Endothelial cell of umbilical vein (primary cell): ENCODE measurements at regions of chr16 and their contacts with region 1.

Region 1: DNA sequence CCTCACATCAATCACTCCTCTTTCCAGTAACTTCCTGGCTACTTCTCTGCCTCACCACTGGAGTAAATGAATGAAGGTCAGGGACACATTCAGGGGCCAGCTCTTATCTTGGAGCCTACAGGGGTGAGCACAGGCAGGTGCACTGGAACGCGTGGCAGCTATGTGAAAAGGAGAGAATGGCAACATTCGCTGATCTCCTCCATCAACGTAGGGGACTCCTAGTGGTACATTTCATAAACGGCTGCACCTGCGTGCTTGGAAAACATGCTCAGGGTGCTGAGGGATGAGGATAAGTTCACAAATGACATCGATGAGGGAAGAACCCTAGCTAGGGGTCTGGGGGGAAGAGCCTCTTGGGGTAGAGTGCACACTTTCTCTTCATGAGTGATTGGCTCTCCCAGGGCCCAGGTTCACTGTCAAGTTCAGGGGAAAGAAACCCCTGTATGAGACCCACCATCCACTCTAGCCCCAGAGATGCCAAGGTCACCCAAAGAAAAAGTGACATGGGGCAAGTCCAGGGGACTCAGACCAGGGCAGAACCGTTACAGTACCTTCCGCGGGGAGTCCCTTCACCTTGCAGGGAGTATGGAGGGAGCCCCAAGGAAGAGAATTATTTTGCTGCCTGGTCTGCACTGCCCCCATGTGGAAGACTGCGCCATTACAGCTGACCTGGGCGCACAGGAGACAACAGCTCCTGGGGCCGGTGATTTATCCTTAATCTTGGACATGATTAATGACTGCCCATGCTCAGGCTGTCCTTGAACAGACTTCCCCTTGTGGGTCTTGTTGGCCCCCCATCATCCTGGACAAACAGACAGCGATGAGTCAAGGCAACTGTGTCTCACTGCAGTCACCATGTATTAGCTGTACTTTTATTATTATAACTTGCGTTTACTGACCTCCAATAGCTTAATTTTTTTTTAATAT is 30.1 kb downstream of the VAC14 start:
- DNase-seq: peak; percentile 71
- H3K4me3 ChIP-seq: no peak overlapping the region
- H3K27ac ChIP-seq: no peak overlapping the region
- H3K4me1 ChIP-seq: no peaks in the 10 kb centered on the region
- H3K27me3 ChIP-seq: no peaks in the 10 kb centered on the region
- CTCF ChIP-seq: peak; percentile 88 to 89
- POLR2A ChIP-seq: no peak

Region 2: GRCh38 chr16:70508752-70509151 is 262.1 kb before region 1 on chr16:
- CTCF ChIA-PET with region 1: interaction called, 12 read pairs
- POLR2A ChIA-PET with region 1: no interaction called
- dilution Hi-C with region 1: no loop called
- intact Hi-C with region 1: no loop called
- DNase-seq: peak; percentile 78
- H3K4me3 ChIP-seq: no peak overlapping the region
- H3K27ac ChIP-seq: no peak overlapping the region
- H3K4me1 ChIP-seq: peaks cover 10% of the 10 kb centered on the region
- H3K27me3 ChIP-seq: no peaks in the 10 kb centered on the region
- CTCF ChIP-seq: peak in 1 of 2 donors; percentile 10
- POLR2A ChIP-seq: no peak

Region 3: DNA sequence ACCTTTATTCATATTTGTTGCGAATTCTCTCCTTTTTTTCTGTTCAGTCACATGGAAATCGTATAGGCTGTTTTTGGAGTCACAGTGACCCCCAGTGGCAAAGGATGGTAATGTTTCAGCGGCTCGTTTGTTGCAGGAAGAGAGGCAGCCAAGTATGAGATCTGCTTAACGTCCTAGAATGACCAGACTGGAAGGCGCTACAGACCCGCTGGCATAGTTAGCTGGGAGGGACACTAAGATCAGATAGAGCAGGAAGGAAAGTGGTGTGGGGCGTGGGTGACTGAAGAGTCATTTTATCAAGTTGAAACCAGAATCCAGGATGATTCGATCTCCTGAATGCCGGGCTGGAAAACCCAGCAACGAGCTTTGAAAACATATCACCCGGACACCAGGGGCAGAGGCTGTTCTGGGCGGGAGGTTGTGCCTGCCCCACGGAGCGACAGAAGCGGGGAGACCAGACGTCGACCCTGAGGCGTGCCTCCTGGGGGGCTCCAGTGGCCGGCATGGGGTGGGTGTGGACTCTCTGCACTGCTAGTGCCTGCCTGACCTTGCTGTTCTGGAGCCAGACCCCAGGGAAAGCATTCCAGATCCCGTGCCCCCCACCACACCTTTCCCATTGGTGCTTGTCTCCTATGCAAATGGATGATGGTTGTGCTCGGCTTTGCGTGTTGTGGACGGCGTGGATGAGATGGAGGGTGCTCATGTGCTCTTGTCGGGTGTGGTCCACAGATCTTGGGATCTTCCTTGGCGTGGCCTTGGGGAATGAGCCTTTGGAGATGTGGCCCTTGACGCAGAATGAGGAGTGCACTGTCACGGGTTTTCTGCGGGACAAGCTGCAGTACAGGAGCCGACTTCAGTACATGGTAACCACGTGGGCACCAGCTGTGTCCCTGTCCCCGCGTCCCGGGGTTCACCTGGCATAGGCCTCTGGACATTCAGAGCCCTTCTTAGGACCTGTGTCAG is 116.8 kb before region 1 on chr16:
- CTCF ChIA-PET with region 1: interaction called, 69 read pairs
- POLR2A ChIA-PET with region 1: interaction called, 4 read pairs
- dilution Hi-C with region 1: no loop called
- intact Hi-C with region 1: loop called (anchors 1 kb)
- DNase-seq: peak; percentile 95
- H3K4me3 ChIP-seq: peak overlapping the region in 2 of 3 experiments; percentile 8 to 29
- H3K27ac ChIP-seq: no peak overlapping the region
- H3K4me1 ChIP-seq: no peaks in the 10 kb centered on the region
- H3K27me3 ChIP-seq: no peaks in the 10 kb centered on the region
- CTCF ChIP-seq: peak; percentile 67 to 78
- POLR2A ChIP-seq: no peak

Region 4: GRCh38 chr16:70685938-70686375 is 84.9 kb before region 1 on chr16 and contains the start of gene MTSS2:
- CTCF ChIA-PET with region 1: interaction called, 144 read pairs
- POLR2A ChIA-PET with region 1: interaction called, 3 read pairs
- dilution Hi-C with region 1: no loop called
- intact Hi-C with region 1: loop called (anchors 1 kb)
- DNase-seq: peak; percentile 89
- H3K4me3 ChIP-seq: peak within 1 kb of the TSS; percentile 58 to 94 (median 61)
- H3K27ac ChIP-seq: peak within 1 kb of the TSS; percentile 34
- H3K4me1 ChIP-seq: peaks cover 21% of the 10 kb centered on the region
- H3K27me3 ChIP-seq: no peaks in the 10 kb centered on the region
- CTCF ChIP-seq: no peak
- POLR2A ChIP-seq: peak; percentile 49
- total RNA-seq, gene MTSS2: 37.6 and 42.3 TPM in 2 replicates

Region 5: GRCh38 chr16:70743791-70744190 is 27.1 kb before region 1 on chr16:
- CTCF ChIA-PET with region 1: interaction called, 42 read pairs
- POLR2A ChIA-PET with region 1: no interaction called
- dilution Hi-C with region 1: no loop called
- intact Hi-C with region 1: loop called (anchors 1 kb)
- DNase-seq: no peak
- H3K4me3 ChIP-seq: no peak overlapping the region
- H3K27ac ChIP-seq: no peak overlapping the region
- H3K4me1 ChIP-seq: peaks cover 15% of the 10 kb centered on the region
- H3K27me3 ChIP-seq: no peaks in the 10 kb centered on the region
- CTCF ChIP-seq: no peak
- POLR2A ChIP-seq: no peak

Region 6: GRCh38 chr16:71358464-71358998 is 587.6 kb after region 1 on chr16 and contains the start of gene CALB2:
- CTCF ChIA-PET with region 1: interaction called, 4 read pairs
- POLR2A ChIA-PET with region 1: no interaction called
- dilution Hi-C with region 1: no loop called
- intact Hi-C with region 1: loop called (anchors 5 kb)
- DNase-seq: peak; percentile 47
- H3K4me3 ChIP-seq: no peak within 1 kb of the TSS
- H3K27ac ChIP-seq: no peak within 1 kb of the TSS
- H3K4me1 ChIP-seq: peaks cover 2% of the 10 kb centered on the region
- H3K27me3 ChIP-seq: no peaks in the 10 kb centered on the region
- CTCF ChIP-seq: peak; percentile 76 to 95
- POLR2A ChIP-seq: no peak
- total RNA-seq, gene CALB2: not detected in 2 replicates